ENCODE measurements at regions of chr12 and their contacts with region 1.

Region 1: DNA sequence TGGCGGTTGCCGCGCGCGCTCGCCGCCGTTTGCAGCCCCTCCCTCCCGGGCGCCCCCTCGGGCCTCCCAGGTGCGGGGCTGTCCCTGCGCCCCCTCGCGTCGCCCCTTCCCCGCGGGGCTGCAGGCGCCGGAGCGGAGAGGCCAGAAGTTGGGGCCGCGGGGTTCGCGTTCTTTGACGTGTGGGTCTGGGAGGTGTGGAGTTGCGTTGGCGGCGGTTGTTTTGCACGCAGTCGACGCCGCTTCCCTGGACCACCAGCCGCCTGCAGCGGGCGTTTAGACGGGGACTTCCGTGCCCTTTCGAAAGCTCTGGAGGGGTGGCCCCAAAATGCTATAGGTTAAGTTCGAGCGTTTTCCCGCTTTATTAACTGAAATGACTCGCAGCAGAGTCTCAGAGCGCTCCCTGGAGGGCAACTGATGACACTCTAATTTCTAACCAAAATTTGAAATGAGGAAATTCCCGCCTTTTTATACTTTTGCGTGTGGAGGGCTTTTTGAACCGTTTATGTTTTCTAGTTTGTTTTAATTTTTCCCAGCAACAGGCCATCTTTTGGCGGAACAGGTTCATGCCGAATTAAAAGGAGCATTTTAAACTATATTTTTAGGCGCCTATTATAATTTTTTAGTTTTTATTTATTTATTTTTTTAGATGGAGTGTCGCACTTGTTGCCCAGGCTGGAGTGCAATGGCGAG is 939 bp downstream of the TMPO start:
- DNase-seq: peak; percentile 86 to 88
- H3K4me3 ChIP-seq: peak overlapping the region; percentile 99
- H3K4me3 Mint-ChIP-seq: peak overlapping the region; percentile 72
- H3K27ac Mint-ChIP-seq: peak overlapping the region; percentile 98
- H3K4me1 ChIP-seq: peaks cover 20% of the 10 kb centered on the region
- H3K4me1 Mint-ChIP-seq: peaks cover 15% of the 10 kb centered on the region
- H3K27me3 ChIP-seq: no peaks in the 10 kb centered on the region
- H3K27me3 Mint-ChIP-seq: no peaks in the 10 kb centered on the region
- CTCF ChIP-seq: peak; percentile 55 to 61

Region 2: DNA sequence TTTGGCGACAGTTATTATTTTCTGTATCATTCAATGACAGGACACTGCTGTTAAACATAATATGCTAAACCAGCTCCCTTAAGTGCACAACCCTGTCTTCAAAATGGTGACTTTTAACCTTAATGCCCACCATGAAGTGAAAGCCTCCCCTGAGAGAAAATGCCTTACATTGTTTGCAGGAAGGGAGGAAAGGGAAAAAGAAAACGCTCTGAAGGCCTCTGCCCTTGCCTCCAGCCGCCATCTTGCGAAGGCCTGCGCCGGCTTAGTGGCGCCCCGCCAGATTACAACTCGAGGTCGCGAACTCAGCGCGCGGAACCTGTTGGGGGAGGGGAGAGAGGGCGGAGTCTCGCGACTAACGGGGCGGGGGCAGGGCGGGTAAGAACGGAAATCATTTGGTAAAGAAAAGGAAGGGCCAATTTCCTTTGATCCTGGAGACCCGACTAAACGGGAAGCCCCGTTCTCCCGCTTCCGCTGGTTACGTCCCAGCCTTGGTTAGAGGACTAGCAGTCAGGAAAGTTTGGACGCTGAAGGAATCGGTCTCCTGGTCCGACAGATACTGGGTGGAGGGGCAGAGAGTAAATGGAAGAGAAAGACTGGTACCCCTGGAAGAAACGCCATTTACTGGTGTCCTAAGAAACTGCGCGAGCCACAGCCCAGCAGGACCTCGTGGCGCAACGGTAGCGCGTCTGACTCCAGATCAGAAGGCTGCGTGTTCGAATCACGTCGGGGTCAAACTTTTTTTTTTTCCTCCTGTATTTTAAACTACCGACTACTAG is 12.5 kb before region 1 on chr12:
- CTCF ChIA-PET with region 1: no interaction called
- POLR2A ChIA-PET with region 1: interaction called, 6 read pairs
- intact Hi-C with region 1: loop called (anchors 1 kb)
- DNase-seq: peak; percentile 93 to 94
- H3K4me3 ChIP-seq: peak overlapping the region; percentile 71
- H3K4me3 Mint-ChIP-seq: peak overlapping the region; percentile 81
- H3K27ac Mint-ChIP-seq: peak overlapping the region; percentile 99
- H3K4me1 ChIP-seq: peaks cover 23% of the 10 kb centered on the region
- H3K4me1 Mint-ChIP-seq: peaks cover 31% of the 10 kb centered on the region
- H3K27me3 ChIP-seq: no peaks in the 10 kb centered on the region
- H3K27me3 Mint-ChIP-seq: peaks cover 10% of the 10 kb centered on the region
- CTCF ChIP-seq: no peak

Region 3: GRCh38 chr12:99009654-99010296 is 493.4 kb after region 1 on chr12:
- CTCF ChIA-PET with region 1: interaction called, 11 read pairs
- POLR2A ChIA-PET with region 1: no interaction called
- intact Hi-C with region 1: no loop called
- DNase-seq: no peak
- H3K4me3 ChIP-seq: no peak overlapping the region
- H3K4me3 Mint-ChIP-seq: no peak overlapping the region
- H3K27ac Mint-ChIP-seq: no peak overlapping the region
- H3K4me1 ChIP-seq: no peaks in the 10 kb centered on the region
- H3K4me1 Mint-ChIP-seq: no peaks in the 10 kb centered on the region
- H3K27me3 ChIP-seq: no peaks in the 10 kb centered on the region
- H3K27me3 Mint-ChIP-seq: peaks cover 3% of the 10 kb centered on the region
- CTCF ChIP-seq: no peak